Dendritic cell treated with granulocyte-macrophage colony-stimulating factor and Interleukin-4, amounts not matched to agents 40 ng/mL and 50 ng/mL, for 4 days (primary cell): ENCODE measurements at regions of chr2 and their contacts with region 1.

Region 1: GRCh38 chr2:142849816-142850215 is 27.6 kb upstream of the KYNU start:
- H3K4me3 Mint-ChIP-seq: no peak overlapping the region
- H3K27ac Mint-ChIP-seq: no peak overlapping the region
- H3K4me1 Mint-ChIP-seq: no peaks in the 10 kb centered on the region
- H3K27me3 Mint-ChIP-seq: no peaks in the 10 kb centered on the region

Region 2: GRCh38 chr2:142422769-142423168 is 427.0 kb before region 1 on chr2:
- intact Hi-C with region 1: loop called (anchors 5 kb)
- H3K4me3 Mint-ChIP-seq: no peak overlapping the region
- H3K27ac Mint-ChIP-seq: no peak overlapping the region
- H3K4me1 Mint-ChIP-seq: no peaks in the 10 kb centered on the region
- H3K27me3 Mint-ChIP-seq: no peaks in the 10 kb centered on the region